Activated naive CD4-positive, alpha-beta T cell treated with anti-CD3 and anti-CD28 coated beads for 36 hours (primary cell): ENCODE measurements at regions of chr17 and their contacts with region 1.

Region 1: DNA sequence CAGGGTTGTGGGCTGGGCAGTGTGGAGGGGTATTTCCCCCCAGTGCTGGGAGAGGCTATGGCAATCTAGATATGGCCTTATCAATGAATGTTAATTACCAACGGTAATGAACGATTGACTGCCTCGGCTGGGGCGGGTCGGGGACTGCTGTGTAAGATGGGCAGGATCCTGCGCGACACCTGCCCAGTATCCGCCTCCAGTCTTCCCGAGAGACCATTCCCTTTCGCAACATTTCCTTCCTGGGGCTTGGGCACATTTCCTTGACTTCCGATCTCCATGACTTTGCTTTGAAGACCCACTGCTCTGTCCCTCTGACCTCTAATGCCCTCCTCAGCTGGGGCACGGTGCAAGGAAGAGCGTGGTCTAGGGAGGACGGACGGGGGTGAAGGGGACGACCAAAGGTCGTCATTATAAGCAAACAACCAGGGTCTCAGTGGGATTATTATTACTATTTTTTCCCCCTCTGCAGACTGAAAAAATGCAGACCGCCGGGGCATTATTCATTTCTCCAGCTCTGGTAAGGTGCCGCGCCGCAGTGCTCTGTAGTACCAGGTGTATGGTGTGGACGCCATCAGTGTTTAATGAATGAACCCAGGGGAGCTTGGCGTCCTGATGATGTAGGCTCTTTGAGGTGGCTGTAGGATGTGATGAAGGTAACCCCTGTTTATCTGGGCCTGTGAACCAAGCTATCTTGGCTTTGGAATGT is 506 bp downstream of the ATP5MC1 start:
- DNase-seq: peak; percentile 21
- H3K4me3 Mint-ChIP-seq: peak overlapping the region; percentile 99
- H3K27ac Mint-ChIP-seq: peak overlapping the region; percentile 95
- H3K4me1 Mint-ChIP-seq: peaks cover 25% of the 10 kb centered on the region
- H3K27me3 Mint-ChIP-seq: no peaks in the 10 kb centered on the region

Region 2: GRCh38 chr17:48101012-48101720 is 791.9 kb before region 1 on chr17 and contains the start of gene CBX1:
- CTCF ChIA-PET with region 1: no interaction called
- intact Hi-C with region 1: loop called (anchors 5 kb)
- DNase-seq: peak; percentile 95
- H3K4me3 Mint-ChIP-seq: peak within 1 kb of the TSS; percentile 97
- H3K27ac Mint-ChIP-seq: peak within 1 kb of the TSS; percentile 81
- H3K4me1 Mint-ChIP-seq: peaks cover 34% of the 10 kb centered on the region
- H3K27me3 Mint-ChIP-seq: no peaks in the 10 kb centered on the region
- total RNA-seq, gene CBX1: 61.6 to 63.0 TPM

Region 3: DNA sequence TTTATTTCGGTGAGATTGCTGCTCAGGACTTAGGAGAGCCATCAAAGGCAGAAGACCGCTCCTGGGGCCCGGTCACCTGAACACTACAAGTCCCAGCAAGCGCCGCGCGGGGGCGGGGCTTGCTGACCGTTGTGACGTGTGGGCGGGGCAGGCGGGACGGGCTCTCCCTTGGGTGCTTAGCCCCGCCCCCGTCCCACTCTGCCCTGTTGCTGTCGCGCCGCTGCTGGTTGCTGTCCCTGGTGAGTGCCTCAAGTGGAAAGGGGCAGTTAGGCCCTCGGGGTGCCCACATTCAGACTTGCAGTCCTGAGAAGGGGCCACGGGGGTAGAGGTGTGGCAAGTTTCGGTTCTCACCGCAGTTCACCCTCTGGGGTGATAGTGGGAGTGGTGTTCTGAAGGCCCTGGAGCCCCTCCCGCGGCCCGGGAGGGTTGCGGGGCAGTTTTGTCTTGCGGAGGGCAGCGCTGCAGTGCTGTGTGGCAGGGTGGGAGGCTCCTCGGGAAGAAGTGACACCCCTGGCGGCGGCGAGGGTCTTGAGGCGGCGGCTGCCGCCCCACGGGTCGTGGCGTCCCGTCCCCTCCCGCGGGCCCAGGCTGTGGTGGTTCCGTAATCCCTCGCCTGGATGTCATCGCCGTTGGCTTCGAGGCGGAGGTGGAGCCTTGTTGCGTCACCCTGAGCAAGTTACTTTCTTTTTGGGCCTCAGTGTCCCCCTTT is 62.1 kb before region 1 on chr17 and contains the start of gene CALCOCO2:
- CTCF ChIA-PET with region 1: no interaction called
- intact Hi-C with region 1: loop called (anchors 1 kb)
- DNase-seq: peak; percentile 92
- H3K4me3 Mint-ChIP-seq: peak within 1 kb of the TSS; percentile 95
- H3K27ac Mint-ChIP-seq: peak within 1 kb of the TSS; percentile 93
- H3K4me1 Mint-ChIP-seq: peaks cover 52% of the 10 kb centered on the region
- H3K27me3 Mint-ChIP-seq: no peaks in the 10 kb centered on the region
- total RNA-seq, gene CALCOCO2: 78.2 to 80.3 TPM

Region 4: GRCh38 chr17:48860034-48860433 is 33.1 kb before region 1 on chr17:
- CTCF ChIA-PET with region 1: no interaction called
- intact Hi-C with region 1: no loop called
- DNase-seq: no peak
- H3K4me3 Mint-ChIP-seq: no peak overlapping the region
- H3K27ac Mint-ChIP-seq: no peak overlapping the region
- H3K4me1 Mint-ChIP-seq: no peaks in the 10 kb centered on the region
- H3K27me3 Mint-ChIP-seq: no peaks in the 10 kb centered on the region

Region 5: DNA sequence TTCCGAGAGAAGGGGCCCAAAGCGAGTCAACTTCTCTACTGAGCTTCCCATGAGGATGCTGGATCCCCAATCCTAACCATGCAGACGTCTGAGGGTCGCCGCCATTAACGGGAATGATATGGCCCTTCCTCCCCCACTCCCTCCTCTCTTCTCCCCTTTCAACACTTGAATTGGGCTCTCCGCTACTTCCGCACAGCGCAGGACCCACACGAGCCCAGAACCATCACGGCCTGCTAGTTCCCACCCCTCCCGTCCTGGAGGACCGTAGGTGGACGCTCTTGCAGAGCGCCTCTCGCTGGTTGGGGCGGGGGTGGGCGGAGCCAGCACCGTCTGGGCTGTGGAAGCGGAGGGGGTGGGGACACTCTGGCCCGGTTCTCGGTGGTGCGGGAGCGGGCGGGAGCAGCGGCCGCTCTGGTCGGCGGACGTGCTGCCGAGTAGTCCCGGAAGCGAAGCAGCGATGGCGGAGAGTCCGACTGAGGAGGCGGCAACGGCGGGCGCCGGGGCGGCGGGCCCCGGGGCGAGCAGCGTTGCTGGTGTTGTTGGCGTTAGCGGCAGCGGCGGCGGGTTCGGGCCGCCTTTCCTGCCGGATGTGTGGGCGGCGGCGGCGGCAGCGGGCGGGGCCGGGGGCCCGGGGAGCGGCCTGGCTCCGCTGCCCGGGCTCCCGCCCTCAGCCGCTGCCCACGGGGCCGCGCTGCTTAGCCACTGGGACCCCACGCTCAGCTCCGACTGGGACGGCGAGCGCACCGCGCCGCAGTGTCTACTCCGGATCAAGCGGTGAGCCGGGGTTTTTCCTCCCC is 15.2 kb after region 1 on chr17 and contains the start of gene UBE2Z:
- CTCF ChIA-PET with region 1: interaction called, 3 read pairs
- intact Hi-C with region 1: loop called (anchors 1 kb)
- DNase-seq: peak; percentile 93
- H3K4me3 Mint-ChIP-seq: peak within 1 kb of the TSS; percentile 88
- H3K27ac Mint-ChIP-seq: peak within 1 kb of the TSS; percentile 96
- H3K4me1 Mint-ChIP-seq: peaks cover 44% of the 10 kb centered on the region
- H3K27me3 Mint-ChIP-seq: no peaks in the 10 kb centered on the region
- total RNA-seq, gene UBE2Z: 76.1 to 76.9 TPM

Region 6: GRCh38 chr17:48915459-48916282 is 22.6 kb after region 1 on chr17:
- CTCF ChIA-PET with region 1: interaction called, 12 read pairs
- intact Hi-C with region 1: loop called (anchors 1 kb)
- DNase-seq: peak; percentile 80
- H3K4me3 Mint-ChIP-seq: peak overlapping the region; percentile 62
- H3K27ac Mint-ChIP-seq: peak overlapping the region; percentile 92
- H3K4me1 Mint-ChIP-seq: peaks cover 60% of the 10 kb centered on the region
- H3K27me3 Mint-ChIP-seq: no peaks in the 10 kb centered on the region

Region 7: DNA sequence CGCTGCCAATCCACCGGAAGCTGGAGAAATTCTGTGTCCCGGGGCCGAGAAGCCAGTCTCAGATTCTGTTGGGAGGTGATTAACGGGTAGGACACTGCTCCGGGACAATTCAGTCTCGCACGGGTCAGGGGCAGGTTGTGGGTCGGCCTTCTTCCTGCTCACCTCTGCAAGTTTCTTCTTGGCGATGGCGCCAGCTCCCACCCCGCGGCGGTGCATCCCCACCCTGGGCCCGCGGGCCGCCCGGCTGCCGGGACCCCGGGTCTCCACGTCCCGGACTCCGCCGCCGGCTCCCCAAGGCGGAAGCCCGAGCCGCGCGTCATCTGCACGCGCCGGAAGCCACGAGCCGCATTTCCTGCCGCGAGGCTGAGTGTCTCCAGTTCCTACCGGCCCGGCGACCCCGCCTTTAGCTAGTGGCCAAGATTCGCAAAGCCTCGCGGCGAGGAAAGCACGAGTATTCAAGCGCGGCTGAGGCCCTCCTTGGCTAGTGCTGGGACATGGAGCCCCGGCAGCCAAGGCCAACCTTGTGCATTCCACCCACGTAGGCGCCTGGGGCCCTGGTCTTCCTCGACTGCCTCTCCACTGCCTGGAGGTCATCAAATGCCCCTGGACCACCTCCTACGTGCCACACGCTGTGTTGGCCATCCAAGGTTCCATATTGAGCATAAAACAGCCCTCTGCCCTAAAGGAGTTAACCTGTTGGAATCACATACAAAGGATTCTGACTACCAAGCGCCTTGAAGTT is 51.6 kb after region 1 on chr17 and contains the start of gene SNF8:
- CTCF ChIA-PET with region 1: no interaction called
- intact Hi-C with region 1: loop called (anchors 1 kb)
- DNase-seq: peak; percentile 95
- H3K4me3 Mint-ChIP-seq: peak within 1 kb of the TSS; percentile 99
- H3K27ac Mint-ChIP-seq: peak within 1 kb of the TSS; percentile 89
- H3K4me1 Mint-ChIP-seq: peaks cover 18% of the 10 kb centered on the region
- H3K27me3 Mint-ChIP-seq: no peaks in the 10 kb centered on the region
- total RNA-seq, gene SNF8: 90.3 to 96.3 TPM